HAP-1 (cell line): ENCODE measurements at regions of chr17 and their contacts with region 1.

Region 1: GRCh38 chr17:11997147-11997846 is at the start of gene ZNF18:
- DNase-seq: peak; percentile 89 to 96
- H3K4me3 ChIP-seq: peak within 1 kb of the TSS; percentile 94
- H3K4me1 ChIP-seq: peaks cover 13% of the 10 kb centered on the region
- H3K27me3 ChIP-seq: no peaks in the 10 kb centered on the region

Region 2: DNA sequence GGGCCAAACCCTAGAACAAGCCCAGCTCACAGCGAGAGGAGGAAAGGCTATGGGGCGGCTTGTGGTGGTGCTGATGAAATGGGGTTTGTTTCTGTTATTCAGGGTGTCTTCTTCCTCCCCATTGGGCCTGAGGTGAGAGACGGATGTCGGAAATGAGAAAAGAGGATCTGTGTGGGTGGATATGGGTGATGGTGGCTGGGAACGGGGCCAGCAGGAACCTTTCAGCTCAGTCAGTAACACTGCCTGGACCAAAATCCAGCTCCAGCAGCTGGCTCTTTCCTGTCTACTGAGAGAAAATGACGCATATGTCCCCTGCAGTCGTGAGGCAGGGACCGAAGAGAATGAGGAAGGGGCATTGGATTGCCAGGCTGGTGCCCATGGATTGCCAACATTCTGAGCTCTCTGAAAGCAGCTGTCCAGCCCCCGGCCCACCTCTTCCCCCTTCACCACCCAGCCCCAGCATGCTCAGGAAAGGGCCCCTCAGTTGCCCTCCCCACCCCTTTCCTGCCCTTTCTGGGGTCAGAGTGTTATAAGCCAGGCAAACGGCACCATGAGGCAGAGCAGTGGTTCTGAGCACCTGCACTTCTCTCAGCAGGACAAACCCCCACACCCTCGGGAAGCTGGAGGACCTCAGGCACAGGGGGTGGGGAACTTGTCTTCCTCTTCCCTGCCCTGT is 1344.2 kb before region 1 on chr17:
- in situ Hi-C with region 1: loop called (anchors 25 kb)
- DNase-seq: no peak
- H3K4me3 ChIP-seq: no peak overlapping the region
- H3K4me1 ChIP-seq: no peaks in the 10 kb centered on the region
- H3K27me3 ChIP-seq: no peaks in the 10 kb centered on the region

Region 3: DNA sequence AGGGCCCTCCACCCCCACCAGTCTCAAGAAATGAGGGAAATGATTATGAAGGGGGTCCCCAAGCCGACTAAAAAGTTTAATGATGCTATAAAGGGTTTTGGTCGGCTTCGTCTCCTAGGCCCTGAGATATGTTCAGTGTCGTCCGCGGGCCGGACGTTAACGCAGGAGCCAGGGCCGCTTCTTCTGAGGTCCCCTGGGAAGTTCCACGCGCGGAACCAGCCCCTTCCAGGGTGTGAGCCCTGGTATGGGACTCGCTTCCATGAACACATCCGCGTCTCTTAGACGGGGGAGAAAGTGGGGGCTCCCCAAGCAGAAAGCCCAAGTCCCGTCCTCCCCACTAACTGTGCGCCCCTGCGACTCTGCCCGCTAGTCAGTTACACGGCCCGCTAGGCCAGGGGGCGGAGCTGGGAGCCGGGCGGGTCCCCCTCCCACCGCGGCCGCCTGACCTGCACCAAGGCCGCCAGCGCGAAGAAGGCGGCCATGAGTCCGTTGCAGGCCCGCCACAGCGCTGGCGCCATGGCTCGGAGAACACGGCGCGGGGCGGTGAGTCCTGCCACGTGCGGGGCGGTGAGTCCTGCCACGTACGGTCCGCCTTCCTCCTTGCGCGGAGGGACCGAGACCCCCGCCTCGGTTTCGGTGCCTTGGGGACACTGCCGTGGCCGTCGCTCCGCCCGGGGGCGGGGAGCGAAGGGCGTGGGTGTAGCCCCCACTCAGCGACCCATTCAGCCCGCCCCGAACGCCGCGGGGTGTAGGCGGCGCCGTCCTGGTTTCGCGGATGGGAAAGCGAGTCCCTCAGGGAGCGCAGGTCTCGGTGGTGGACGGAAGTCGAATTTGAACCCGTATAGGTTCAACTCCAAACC is 1267.7 kb before region 1 on chr17 and contains the start of gene TMEM220:
- in situ Hi-C with region 1: loop called (anchors 25 kb)
- DNase-seq: peak; percentile 73 to 86
- H3K4me3 ChIP-seq: peak within 1 kb of the TSS; percentile 57
- H3K4me1 ChIP-seq: peaks cover 6% of the 10 kb centered on the region
- H3K27me3 ChIP-seq: no peaks in the 10 kb centered on the region

Region 4: GRCh38 chr17:10875979-10876555 is 1121.2 kb before region 1 on chr17:
- in situ Hi-C with region 1: loop called (anchors 25 kb)
- DNase-seq: peak; percentile 18 to 67
- H3K4me3 ChIP-seq: no peak overlapping the region
- H3K4me1 ChIP-seq: no peaks in the 10 kb centered on the region
- H3K27me3 ChIP-seq: no peaks in the 10 kb centered on the region